ENCODE measurements at regions of chr12 and their contacts with region 1.

Region 1: GRCh38 chr12:90091021-90091651 is 382.5 kb upstream of the ATP2B1 start:
- DNase-seq: peak; percentile 78 to 91
- H3K4me3 ChIP-seq: peak overlapping the region; percentile 6; the same call in 1 of the 2 replicates
- H3K27ac ChIP-seq: peak overlapping the region; percentile 95
- H3K4me1 ChIP-seq: peaks cover 16% of the 10 kb centered on the region
- H3K27me3 ChIP-seq: no peaks in the 10 kb centered on the region
- CTCF ChIP-seq: no peak

Region 2: DNA sequence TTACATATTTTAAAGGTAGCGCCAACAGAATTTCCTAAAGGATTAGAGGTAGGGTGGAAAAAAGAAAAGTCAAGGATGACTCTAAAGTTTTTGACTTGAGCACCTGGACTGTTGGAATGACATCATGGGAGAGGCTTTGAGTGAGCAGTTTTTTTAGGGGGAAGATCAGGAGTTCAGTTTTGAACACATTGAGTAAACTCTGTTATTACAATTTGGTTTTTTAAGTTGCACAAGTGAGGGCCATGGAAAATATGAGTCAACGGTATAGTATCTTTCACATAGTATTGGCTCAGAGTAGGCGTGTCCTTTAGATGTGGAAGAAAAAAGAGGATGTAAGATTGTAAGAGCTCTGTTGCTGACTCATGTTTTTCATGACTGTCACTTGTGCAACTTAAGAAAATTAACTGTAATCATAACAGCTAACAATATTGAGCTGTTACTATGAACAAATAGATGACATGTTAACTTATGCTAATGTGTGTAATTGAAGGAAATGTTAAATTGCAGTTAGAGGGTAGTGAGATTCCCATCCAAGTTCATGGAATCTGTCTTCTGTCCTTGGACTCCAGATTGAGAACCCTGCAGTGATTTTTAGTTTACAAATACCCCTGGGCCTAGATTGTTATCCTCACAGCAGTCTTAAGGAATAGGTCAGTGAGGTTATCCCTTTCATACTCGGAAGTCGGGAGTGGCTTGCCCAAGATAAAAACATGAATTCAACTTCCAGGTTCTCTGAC is 334.4 kb before region 1 on chr12:
- CTCF ChIA-PET with region 1: no interaction called
- POLR2A ChIA-PET with region 1: no interaction called
- intact Hi-C with region 1: loop called (anchors 2 kb)
- DNase-seq: peak; percentile 29 to 98
- H3K4me3 ChIP-seq: peak overlapping the region; percentile 22; the same call in 1 of the 2 replicates
- H3K27ac ChIP-seq: peak overlapping the region; percentile 98
- H3K4me1 ChIP-seq: peaks cover 40% of the 10 kb centered on the region
- H3K27me3 ChIP-seq: no peaks in the 10 kb centered on the region
- CTCF ChIP-seq: no peak

Region 3: GRCh38 chr12:89968151-89968700 is 122.9 kb before region 1 on chr12:
- CTCF ChIA-PET with region 1: no interaction called
- POLR2A ChIA-PET with region 1: no interaction called
- intact Hi-C with region 1: loop called (anchors 2 kb)
- DNase-seq: no peak
- H3K4me3 ChIP-seq: no peak overlapping the region
- H3K27ac ChIP-seq: no peak overlapping the region
- H3K4me1 ChIP-seq: peaks cover 21% of the 10 kb centered on the region
- H3K27me3 ChIP-seq: no peaks in the 10 kb centered on the region
- CTCF ChIP-seq: no peak

Region 4: DNA sequence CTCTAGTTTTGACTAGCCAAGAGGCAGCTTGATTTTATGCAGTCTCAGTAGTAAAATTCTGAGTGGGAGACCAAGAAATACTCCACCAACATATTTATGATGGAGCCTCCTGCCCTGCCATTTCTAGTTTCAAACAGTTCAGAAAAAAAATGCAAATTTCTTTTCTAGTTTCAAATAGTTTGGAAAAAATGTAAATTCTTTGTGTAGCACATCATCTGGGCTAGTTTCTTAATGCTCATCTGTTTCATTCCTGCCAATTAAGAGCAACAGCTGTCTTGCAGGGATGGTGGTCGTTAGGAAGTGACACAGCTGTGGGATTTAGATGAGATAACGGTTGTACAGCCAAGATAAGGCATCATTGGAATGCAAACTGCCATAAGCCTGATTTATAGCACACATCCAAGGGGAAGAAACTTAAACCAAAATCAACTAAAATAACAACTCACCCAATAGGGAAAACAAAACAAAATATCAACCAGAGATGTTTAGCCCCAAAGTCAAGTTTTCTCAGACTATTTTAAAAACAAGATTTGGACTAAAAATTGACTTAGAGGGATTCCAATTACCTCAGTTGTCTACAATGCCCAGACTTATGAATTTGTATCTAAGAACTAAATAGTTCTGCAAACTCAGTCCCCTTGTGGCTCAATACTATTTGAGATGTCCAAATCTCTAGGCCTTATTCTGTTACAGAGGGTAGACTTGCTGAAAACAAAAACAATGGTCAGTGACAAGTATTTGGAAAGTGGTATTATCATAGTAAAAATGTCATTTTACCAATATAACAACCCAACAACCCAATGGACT is 91.2 kb before region 1 on chr12:
- CTCF ChIA-PET with region 1: no interaction called
- POLR2A ChIA-PET with region 1: no interaction called
- intact Hi-C with region 1: no loop called
- DNase-seq: no peak
- H3K4me3 ChIP-seq: no peak overlapping the region
- H3K27ac ChIP-seq: no peak overlapping the region
- H3K4me1 ChIP-seq: no peaks in the 10 kb centered on the region
- H3K27me3 ChIP-seq: no peaks in the 10 kb centered on the region
- CTCF ChIP-seq: no peak

Region 5: GRCh38 chr12:90076851-90077319 is 14.3 kb before region 1 on chr12:
- CTCF ChIA-PET with region 1: no interaction called
- POLR2A ChIA-PET with region 1: no interaction called
- intact Hi-C with region 1: no loop called
- DNase-seq: no peak
- H3K4me3 ChIP-seq: no peak overlapping the region
- H3K27ac ChIP-seq: no peak overlapping the region
- H3K4me1 ChIP-seq: no peaks in the 10 kb centered on the region
- H3K27me3 ChIP-seq: no peaks in the 10 kb centered on the region
- CTCF ChIP-seq: no peak